Ovary (tissue), 10 donors: ENCODE measurements at regions of chr16 and their contacts with region 1.

Region 1: GRCh38 chr16:57863434-57864160 is 61.3 kb upstream of the KIFC3 start:
- DNase-seq: peak; percentile 53 to 71 (median 61)
- H3K4me3 ChIP-seq: no peak overlapping the region
- H3K27ac ChIP-seq: no peak overlapping the region
- H3K4me1 ChIP-seq: no peaks in the 10 kb centered on the region
- H3K27me3 ChIP-seq: no peaks in the 10 kb centered on the region
- CTCF ChIP-seq: peak in 2 of 3 donors; percentile 46 to 48
- EP300 ChIP-seq: no peak
- POLR2A ChIP-seq: no peak

Region 2: DNA sequence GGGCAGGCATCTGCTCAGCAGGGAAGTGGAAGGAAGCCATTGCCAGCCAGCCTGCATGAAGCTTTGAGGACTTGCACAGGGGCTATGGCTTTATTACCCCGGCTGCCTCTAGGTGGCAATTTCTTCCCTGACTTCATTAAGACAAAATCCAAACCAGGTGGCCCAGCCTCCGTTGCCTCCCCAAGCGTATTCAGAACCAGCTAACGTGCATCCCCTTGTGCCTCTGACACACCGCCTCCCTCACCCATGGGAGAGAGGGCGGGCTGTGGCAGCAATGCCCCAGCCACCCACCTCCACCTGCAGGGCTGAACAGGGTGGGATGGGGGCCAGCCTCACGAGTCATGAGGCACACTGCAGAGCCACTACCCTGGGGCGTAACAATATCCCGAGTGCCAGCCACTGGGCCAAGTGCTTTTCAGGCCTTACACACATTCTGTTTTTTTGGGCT is 68.1 kb before region 1 on chr16:
- intact Hi-C with region 1: loop called in 1 of 4 experiments (anchors 5 kb)
- DNase-seq: no peak
- H3K4me3 ChIP-seq: no peak overlapping the region
- H3K27ac ChIP-seq: no peak overlapping the region
- H3K4me1 ChIP-seq: no peaks in the 10 kb centered on the region
- H3K27me3 ChIP-seq: no peaks in the 10 kb centered on the region
- CTCF ChIP-seq: no peak
- EP300 ChIP-seq: no peak
- POLR2A ChIP-seq: no peak

Region 3: GRCh38 chr16:57807968-57808528 is 55.5 kb before region 1 on chr16:
- intact Hi-C with region 1: no loop called
- DNase-seq: peak; percentile 72 to 85 (median 79)
- H3K4me3 ChIP-seq: no peak overlapping the region
- H3K27ac ChIP-seq: no peak overlapping the region
- H3K4me1 ChIP-seq: peaks cover 3% of the 10 kb centered on the region
- H3K27me3 ChIP-seq: no peaks in the 10 kb centered on the region
- CTCF ChIP-seq: no peak
- EP300 ChIP-seq: no peak
- POLR2A ChIP-seq: no peak

Region 4: DNA sequence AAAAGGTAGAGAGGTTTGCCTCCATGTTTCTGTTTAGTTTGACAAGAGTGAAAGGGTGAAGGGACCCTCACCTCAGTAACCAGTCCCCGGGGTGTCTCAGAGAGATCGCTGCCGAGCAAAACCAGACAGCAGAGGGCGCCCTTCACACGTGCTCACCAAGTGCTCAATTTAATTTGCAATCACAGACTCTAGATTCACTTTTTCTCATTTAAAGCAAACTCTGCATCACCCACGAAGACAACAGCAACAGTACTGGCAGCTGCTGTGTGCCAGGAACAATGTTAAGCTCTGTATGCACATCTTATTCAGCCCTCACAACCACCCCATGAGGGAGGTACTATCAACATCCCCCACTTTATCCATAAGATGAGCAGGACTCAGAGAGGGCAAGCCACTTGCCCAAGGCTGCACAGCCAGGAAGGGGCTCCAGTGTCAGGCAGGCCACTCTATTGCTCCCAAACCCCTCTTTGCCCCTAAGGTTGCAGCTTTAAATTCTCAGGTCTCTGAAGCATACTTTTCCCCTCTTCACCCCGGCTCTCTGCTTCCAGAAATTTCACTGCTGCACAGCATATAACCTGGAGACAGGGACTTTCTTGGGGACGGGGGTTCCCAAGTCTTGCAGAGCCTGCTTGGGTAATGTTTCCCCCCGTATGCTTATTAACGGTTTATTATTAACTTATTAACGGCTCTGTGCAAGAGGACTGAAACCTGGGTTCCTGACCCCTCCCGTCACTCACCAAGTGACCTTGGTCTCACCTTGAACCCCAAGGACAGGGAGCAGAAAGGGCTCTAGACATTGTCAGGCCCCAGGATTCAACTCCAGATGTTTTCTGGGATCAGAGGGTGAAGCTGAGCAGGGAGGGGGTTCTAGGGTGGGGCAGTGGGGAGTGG is 36.4 kb after region 1 on chr16:
- intact Hi-C with region 1: no loop called
- DNase-seq: peak; percentile 49 to 77 (median 67)
- H3K4me3 ChIP-seq: no peak overlapping the region
- H3K27ac ChIP-seq: no peak overlapping the region
- H3K4me1 ChIP-seq: no peaks in the 10 kb centered on the region
- H3K27me3 ChIP-seq: no peaks in the 10 kb centered on the region
- CTCF ChIP-seq: peak; percentile 31 to 49 (median 49)
- EP300 ChIP-seq: no peak
- POLR2A ChIP-seq: no peak